CD4-positive, alpha-beta memory T cell (primary cell): ENCODE measurements at regions of chr9 and their contacts with region 1.

Region 1: GRCh38 chr9:35675732-35676392 is 2.1 kb downstream of the CA9 start:
- DNase-seq: no peak
- H3K4me3 ChIP-seq: peak overlapping the region in 1 of 2 donors; percentile 41
- H3K4me3 Mint-ChIP-seq: peak overlapping the region; percentile 65 to 91 (median 77)
- H3K27ac ChIP-seq: no peak overlapping the region
- H3K27ac Mint-ChIP-seq: peak overlapping the region in 1 of 7 donors; percentile 17
- H3K4me1 ChIP-seq: peaks cover 12% of the 10 kb centered on the region
- H3K4me1 Mint-ChIP-seq: peaks cover 12 to 15% (median 14%) of the 10 kb centered on the region in 4 donors
- H3K27me3 ChIP-seq: no peaks in the 10 kb centered on the region
- H3K27me3 Mint-ChIP-seq: peaks cover 3 to 6% of the 10 kb centered on the region in 2 donors

Region 2: GRCh38 chr9:34907044-34907443 is 768.8 kb before region 1 on chr9:
- CTCF ChIA-PET with region 1: no interaction called
- POLR2A ChIA-PET with region 1: no interaction called
- intact Hi-C with region 1: no loop called
- DNase-seq: no peak
- H3K4me3 ChIP-seq: no peak overlapping the region
- H3K4me3 Mint-ChIP-seq: no peak overlapping the region
- H3K27ac ChIP-seq: no peak overlapping the region
- H3K27ac Mint-ChIP-seq: no peak overlapping the region
- H3K4me1 ChIP-seq: no peaks in the 10 kb centered on the region
- H3K4me1 Mint-ChIP-seq: no peaks in the 10 kb centered on the region
- H3K27me3 ChIP-seq: no peaks in the 10 kb centered on the region
- H3K27me3 Mint-ChIP-seq: peaks cover 10 to 17% of the 10 kb centered on the region in 2 donors

Region 3: DNA sequence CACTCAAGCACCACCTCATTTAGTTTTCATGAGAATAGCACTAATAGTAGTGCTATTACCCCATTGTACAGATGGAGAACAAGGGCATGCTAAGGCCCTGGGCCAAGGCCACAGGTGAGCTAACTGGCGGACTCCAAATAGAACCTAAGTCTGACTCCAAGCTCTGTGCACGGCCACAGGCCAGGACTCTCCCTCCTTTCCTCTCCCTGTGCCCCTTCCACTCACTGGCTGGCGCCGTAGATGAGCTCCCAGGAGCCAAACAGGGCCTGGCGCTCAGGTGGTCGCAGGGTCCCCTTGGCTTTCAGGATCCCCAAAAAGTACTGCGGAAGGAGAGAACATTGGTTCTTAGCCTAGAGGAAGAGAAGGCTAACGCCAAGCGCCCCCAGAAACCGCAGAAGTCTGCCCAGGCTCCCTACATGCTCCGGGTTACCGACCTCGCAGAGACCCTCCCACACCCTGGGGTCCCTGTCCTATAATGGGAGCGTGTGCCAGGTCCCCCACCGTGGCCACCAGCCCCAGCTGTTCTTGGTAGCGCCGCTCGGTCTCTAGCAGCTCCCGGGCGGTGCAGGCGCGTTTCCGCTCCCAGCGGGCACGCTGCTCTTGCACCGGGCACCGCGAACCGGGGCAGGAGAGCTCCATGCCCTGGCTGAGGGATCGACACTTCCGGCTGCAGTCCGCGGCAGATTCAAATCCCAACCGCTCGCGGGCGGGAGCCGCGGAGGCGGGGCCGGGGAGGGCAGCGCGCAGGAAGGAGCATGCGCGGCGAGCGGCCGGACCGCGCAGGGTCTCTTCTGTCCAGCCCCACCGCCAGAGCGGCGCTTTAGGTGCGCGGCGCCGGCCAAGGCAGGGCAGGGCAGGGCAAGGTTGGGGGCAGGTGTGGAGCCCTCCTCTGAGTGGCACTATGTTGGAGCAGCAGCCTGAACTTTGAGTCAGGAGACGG is 11.1 kb before region 1 on chr9 and contains the start of gene ARHGEF39:
- CTCF ChIA-PET with region 1: interaction called, 8 read pairs
- POLR2A ChIA-PET with region 1: interaction called, 11 read pairs
- intact Hi-C with region 1: no loop called
- DNase-seq: peak; percentile 64 to 72 (median 67)
- H3K4me3 ChIP-seq: peak within 1 kb of the TSS; percentile 42 to 51
- H3K4me3 Mint-ChIP-seq: peak within 1 kb of the TSS; percentile 83 to 91 (median 88)
- H3K27ac ChIP-seq: peak within 1 kb of the TSS; percentile 96
- H3K27ac Mint-ChIP-seq: peak within 1 kb of the TSS; percentile 82 to 100 (median 97)
- H3K4me1 ChIP-seq: peaks cover 56% of the 10 kb centered on the region
- H3K4me1 Mint-ChIP-seq: peaks cover 44 to 68% (median 56%) of the 10 kb centered on the region in 4 donors
- H3K27me3 ChIP-seq: no peaks in the 10 kb centered on the region
- H3K27me3 Mint-ChIP-seq: no peaks in the 10 kb centered on the region
- total RNA-seq, gene ARHGEF39: not detected